ENCODE measurements at regions of chr21 and their contacts with region 1.

Region 1: GRCh38 chr21:31088315-31088714 is 50.0 kb upstream of the KRTAP19-8 start:
- DNase-seq: no peak
- H3K4me3 ChIP-seq: no peak overlapping the region
- CTCF ChIP-seq: no peak
- POLR2A ChIP-seq: no peak

Region 2: DNA sequence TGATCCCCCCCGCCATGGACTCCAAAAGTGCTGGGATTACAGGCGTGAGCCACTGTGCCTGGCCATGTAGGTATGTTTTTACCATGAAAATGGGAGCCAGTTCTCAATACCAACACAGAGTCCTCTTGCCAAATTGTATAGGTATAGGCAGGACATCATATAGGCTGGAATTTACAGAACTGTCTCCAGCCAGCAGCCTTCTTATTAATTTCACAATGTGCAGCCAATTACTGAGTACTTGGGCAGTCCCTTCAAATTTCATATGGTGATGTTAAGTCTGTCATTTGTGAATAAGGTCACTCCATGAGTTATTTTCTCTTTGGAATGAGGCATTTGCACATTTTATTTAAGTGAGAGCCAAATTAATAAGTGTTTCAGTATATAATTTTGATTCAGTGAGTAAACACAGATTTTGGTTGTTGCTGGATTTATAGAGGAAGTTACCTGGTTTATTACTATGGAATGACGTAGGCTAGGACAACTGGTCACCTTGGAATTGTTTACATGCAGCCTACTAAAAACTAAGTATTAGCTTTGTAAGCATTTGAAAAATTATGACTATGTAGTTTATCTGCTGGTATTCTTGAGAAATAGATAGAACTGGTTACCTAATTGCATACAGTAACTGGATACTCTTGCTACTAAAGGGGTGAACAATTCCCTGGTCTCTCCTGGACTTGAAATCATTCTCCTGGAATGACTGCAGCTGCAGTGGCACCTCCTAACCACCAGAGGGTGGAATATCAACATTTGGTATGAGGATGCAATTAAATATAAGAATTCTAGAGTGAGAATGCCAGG is 747.7 kb before region 1 on chr21:
- intact Hi-C with region 1: loop called (anchors 10 kb)
- DNase-seq: peak in 1 of 2 donors; percentile 18
- H3K4me3 ChIP-seq: no peak overlapping the region
- CTCF ChIP-seq: no peak
- POLR2A ChIP-seq: no peak

Region 3: DNA sequence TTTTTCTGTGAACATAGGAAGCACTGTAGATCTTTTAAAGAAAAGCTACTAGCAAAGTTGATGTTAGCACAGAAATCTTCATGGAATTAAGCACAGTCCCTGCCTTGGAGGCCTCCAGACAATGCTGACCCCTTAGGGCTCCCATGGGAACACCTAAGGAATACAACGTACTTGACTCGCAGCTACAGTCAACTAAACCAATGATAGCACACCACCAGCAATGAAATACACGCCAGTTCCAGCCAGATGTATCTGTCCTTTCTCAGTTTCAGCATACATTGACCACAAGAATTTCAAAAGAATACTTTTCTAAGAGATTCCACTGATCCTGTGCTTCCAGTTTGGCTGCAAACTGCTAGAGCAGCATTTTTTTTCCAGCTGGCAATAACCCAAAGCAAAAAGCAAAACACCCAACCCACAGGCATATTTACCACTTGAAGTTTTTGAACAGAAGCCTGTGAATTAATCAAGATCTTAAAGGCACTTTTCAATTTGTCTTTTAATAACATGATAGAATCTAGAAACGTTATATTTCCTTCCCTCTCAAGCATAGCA is 164.1 kb before region 1 on chr21:
- intact Hi-C with region 1: no loop called
- DNase-seq: no peak
- H3K4me3 ChIP-seq: no peak overlapping the region
- CTCF ChIP-seq: no peak
- POLR2A ChIP-seq: no peak

Region 4: DNA sequence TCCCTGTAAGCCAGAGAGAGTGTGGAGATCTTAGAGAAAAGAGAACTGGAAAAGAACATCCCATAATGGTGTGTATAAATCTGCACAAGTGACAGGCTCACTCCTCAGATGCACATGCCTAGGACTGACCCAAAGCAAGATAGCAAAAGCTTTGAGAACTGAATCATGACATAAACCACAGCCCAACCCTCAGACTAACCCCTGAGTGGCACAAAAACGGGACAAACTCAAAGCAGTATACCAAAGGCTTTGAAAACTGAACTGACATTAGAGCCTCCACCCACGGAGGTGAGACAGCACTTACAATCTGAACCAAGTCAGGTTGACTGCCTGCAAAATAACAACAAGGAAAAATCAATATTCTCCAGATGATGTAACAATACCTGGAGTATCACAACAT is 185.0 kb after region 1 on chr21:
- intact Hi-C with region 1: no loop called
- DNase-seq: no peak
- H3K4me3 ChIP-seq: no peak overlapping the region
- CTCF ChIP-seq: no peak
- POLR2A ChIP-seq: no peak

Measured in lower leg skin (tissue), 4 donors.